Left ventricle myocardium inferior (tissue), 1 donor: ENCODE measurements at regions of chr19 and their contacts with region 1.

Region 1: GRCh38 chr19:53906211-53907192 is 2.6 kb upstream of the CACNG7 start:
- DNase-seq: peak; percentile 42
- H3K4me3 ChIP-seq: no peak overlapping the region
- H3K27ac ChIP-seq: no peak overlapping the region
- H3K4me1 ChIP-seq: peaks cover 17% of the 10 kb centered on the region
- H3K27me3 ChIP-seq: peaks cover 96% of the 10 kb centered on the region
- CTCF ChIP-seq: peak; percentile 87

Region 2: DNA sequence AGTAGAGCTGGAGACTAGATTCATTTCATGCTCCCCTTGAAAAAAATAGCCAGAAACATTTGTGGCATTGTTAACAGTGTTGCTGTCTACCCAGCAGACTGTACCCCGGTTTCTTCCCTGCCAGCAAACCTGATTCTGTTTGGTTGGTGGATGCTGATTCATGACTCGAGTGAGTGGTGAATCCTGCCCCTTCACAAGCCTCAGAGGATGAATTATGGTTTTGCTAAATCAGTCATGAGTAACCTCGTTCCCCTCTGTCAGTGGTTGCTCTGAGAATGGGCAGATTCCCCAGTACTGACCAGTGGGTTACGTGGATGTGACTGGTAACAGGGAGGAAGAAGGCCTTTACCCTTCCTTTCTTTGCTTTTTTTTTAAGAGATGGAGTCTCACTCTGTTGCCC is 92.5 kb before region 1 on chr19:
- intact Hi-C with region 1: no loop called
- DNase-seq: no peak
- H3K4me3 ChIP-seq: no peak overlapping the region
- H3K27ac ChIP-seq: no peak overlapping the region
- H3K4me1 ChIP-seq: peaks cover 4% of the 10 kb centered on the region
- H3K27me3 ChIP-seq: no peaks in the 10 kb centered on the region
- CTCF ChIP-seq: no peak

Region 3: GRCh38 chr19:53958168-53958571 is 51.7 kb after region 1 on chr19:
- intact Hi-C with region 1: no loop called
- DNase-seq: no peak
- H3K4me3 ChIP-seq: no peak overlapping the region
- H3K27ac ChIP-seq: no peak overlapping the region
- H3K4me1 ChIP-seq: no peaks in the 10 kb centered on the region
- H3K27me3 ChIP-seq: peaks cover 97% of the 10 kb centered on the region
- CTCF ChIP-seq: no peak

Region 4: DNA sequence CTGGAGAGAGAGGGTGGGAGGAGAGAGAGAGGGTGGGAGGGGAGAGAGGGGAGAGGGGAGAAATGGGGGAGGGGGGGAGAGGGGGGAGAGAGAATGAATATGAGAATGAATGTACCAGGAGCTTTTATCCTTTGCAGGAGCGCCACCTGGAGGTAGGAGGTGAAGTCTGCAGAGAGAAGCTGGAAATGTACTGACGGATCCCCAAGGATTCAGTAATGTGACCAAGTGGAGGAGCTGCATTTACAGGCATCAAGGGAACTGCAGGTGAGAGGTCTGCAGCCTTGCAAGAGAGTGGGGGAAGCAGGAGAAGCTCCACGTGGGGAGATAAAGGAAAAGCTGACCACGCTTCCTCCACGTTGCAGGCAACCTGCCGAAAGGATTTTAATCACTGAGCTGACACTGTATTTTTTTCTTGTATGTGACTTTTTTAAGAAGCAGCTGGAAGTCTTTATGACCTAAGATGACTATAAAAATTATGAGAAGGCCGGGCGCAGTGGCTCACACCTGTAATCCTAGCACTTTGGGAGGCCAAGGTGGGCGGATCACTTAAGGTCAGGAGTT is 123.5 kb after region 1 on chr19:
- intact Hi-C with region 1: loop called (anchors 10 kb)
- DNase-seq: peak; percentile 31
- H3K4me3 ChIP-seq: no peak overlapping the region
- H3K27ac ChIP-seq: no peak overlapping the region
- H3K4me1 ChIP-seq: no peaks in the 10 kb centered on the region
- H3K27me3 ChIP-seq: peaks cover 84% of the 10 kb centered on the region
- CTCF ChIP-seq: peak; percentile 62